Right ventricle myocardium superior (tissue), 1 donor: ENCODE measurements at regions of chr18 and their contacts with region 1.

Region 1: GRCh38 chr18:76450452-76451395 is 44.3 kb downstream of the ZNF516 start:
- DNase-seq: peak; percentile 76
- ATAC-seq: peak; percentile 76

Region 2: GRCh38 chr18:76195601-76196000 is 255.1 kb before region 1 on chr18:
- intact Hi-C with region 1: no loop called
- DNase-seq: no peak
- ATAC-seq: no peak

Region 3: GRCh38 chr18:76492669-76493212 is 42.0 kb after region 1 on chr18:
- intact Hi-C with region 1: loop called (anchors 5 kb)
- DNase-seq: peak; percentile 100
- ATAC-seq: peak; percentile 93